ENCODE measurements at regions of chr1 and their contacts with region 1.

Region 1: DNA sequence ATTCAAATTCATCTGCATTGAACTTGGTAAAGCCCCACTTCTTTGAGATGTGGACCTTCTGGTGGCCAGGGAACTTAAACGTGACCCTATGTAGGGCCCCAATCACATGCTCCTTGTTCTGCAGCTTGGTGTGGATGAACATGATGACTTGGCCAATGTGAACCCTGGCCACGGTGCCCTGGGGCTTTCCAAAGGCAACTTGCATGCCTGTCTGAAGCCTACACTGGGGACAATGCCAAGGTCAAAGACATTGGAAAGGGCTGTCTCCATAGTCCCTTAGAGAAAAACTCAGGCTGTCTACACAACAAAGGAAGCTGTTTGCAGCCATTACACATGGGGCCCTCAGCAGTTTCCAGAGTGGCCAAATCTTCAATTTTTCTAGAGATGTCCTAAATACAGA is 8.9 kb upstream of the VPS13D start:
- DNase-seq: no peak
- H3K4me3 ChIP-seq: no peak overlapping the region
- H3K27ac ChIP-seq: no peak overlapping the region
- H3K4me1 ChIP-seq: no peaks in the 10 kb centered on the region
- H3K27me3 ChIP-seq: no peaks in the 10 kb centered on the region
- CTCF ChIP-seq: no peak

Region 2: DNA sequence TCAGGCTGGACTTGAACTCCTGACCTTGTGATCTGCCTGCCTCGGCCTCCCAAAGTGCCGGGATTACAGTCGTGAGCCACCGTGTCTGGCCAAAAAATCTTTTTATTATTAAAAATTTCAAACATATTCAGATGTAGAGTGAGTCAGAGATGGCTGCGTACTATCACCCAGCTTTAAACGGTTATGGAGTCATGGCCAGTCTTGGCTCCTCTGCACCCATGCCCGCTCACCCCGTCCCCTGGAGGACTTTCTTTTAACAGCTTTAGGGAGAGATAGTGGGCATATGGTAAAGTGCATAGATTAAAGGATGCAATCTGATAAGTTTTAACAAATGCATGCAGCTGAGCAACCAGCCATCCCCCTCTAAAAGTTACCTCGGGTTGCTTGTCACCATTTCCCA is 106.0 kb before region 1 on chr1:
- intact Hi-C with region 1: loop called (anchors 5 kb)
- DNase-seq: no peak
- H3K4me3 ChIP-seq: no peak overlapping the region
- H3K27ac ChIP-seq: no peak overlapping the region
- H3K4me1 ChIP-seq: peaks cover 3% of the 10 kb centered on the region
- H3K27me3 ChIP-seq: peaks cover 45% of the 10 kb centered on the region
- CTCF ChIP-seq: no peak

Measured in left ventricle myocardium inferior (tissue), 1 donor.